ENCODE measurements at regions of chr9 and their contacts with region 1.

Region 1: DNA sequence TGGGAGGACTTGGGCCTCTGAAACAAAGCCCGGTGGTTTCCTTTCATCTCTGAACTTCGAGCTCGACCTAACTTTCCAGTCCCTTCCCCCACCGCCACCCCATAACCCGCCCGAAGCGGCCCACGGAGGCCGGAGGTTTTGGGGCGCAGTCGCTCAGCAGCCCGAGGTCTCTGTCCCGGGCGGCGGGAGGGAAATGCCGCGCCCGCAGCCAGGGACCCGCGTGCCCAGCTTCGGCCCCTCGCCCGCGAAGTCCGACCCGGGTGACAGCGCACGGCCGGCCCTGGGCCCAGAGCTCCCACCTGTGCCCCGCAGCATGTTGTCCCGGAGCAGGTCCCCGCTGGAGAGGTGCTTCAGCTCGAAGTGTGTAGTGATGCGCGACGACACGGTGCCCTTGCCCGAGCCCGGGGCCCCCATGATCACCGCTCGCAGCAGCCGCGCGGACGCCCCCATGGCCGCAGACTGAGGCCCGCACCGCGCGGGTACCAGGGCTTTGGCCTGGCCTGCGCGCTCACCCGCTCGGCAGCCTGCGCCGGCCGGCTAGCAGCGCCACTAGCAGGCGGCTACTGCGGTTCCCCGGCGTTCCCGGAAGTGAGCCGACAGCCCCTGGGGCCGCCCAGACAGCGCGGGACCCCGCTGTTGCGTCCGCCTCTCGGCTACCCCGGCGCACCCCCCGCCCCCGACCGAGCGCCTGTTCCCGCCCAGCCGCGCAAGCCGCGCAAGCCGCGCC is at the start of gene AK3:
- DNase-seq: peak; percentile 85
- H3K4me3 Mint-ChIP-seq: peak within 1 kb of the TSS; percentile 90
- H3K27ac Mint-ChIP-seq: peak within 1 kb of the TSS; percentile 89
- H3K4me1 Mint-ChIP-seq: peaks cover 29% of the 10 kb centered on the region
- H3K27me3 Mint-ChIP-seq: no peaks in the 10 kb centered on the region
- total RNA-seq, gene AK3: 33.9 and 34.5 TPM in 2 replicates

Region 2: GRCh38 chr9:4662108-4662988 is 78.5 kb before region 1 on chr9 and contains the start of gene PLPP6:
- intact Hi-C with region 1: loop called (anchors 5 kb)
- DNase-seq: peak; percentile 73
- H3K4me3 Mint-ChIP-seq: peak within 1 kb of the TSS; percentile 86
- H3K27ac Mint-ChIP-seq: peak within 1 kb of the TSS; percentile 63
- H3K4me1 Mint-ChIP-seq: peaks cover 48% of the 10 kb centered on the region
- H3K27me3 Mint-ChIP-seq: peaks cover 13% of the 10 kb centered on the region
- total RNA-seq, gene PLPP6: 4.8 and 5.9 TPM in 2 replicates

Region 3: DNA sequence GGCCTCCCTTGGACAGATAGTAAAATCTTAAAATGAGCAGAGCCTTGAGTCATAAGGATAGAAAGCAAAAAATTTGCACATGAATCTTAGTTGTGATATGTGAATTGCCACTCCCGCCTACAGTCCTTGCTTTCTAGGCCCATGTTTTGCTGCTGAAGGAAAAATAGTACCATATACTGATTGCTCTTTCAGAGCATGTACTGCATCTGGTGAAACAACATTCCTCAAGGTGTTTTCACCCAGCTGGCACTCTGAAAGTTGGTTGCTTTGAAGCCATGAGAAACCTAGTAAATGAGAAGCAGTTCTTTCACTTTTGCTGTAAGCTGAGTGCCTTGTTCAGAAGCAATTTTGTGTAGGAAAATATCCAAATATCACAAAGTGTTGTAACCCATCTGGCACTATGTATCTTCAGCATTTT is 51.1 kb before region 1 on chr9:
- intact Hi-C with region 1: loop called (anchors 2 kb)
- DNase-seq: no peak
- H3K4me3 Mint-ChIP-seq: no peak overlapping the region
- H3K27ac Mint-ChIP-seq: peak overlapping the region; percentile 57
- H3K4me1 Mint-ChIP-seq: peaks cover 25% of the 10 kb centered on the region
- H3K27me3 Mint-ChIP-seq: no peaks in the 10 kb centered on the region

Region 4: DNA sequence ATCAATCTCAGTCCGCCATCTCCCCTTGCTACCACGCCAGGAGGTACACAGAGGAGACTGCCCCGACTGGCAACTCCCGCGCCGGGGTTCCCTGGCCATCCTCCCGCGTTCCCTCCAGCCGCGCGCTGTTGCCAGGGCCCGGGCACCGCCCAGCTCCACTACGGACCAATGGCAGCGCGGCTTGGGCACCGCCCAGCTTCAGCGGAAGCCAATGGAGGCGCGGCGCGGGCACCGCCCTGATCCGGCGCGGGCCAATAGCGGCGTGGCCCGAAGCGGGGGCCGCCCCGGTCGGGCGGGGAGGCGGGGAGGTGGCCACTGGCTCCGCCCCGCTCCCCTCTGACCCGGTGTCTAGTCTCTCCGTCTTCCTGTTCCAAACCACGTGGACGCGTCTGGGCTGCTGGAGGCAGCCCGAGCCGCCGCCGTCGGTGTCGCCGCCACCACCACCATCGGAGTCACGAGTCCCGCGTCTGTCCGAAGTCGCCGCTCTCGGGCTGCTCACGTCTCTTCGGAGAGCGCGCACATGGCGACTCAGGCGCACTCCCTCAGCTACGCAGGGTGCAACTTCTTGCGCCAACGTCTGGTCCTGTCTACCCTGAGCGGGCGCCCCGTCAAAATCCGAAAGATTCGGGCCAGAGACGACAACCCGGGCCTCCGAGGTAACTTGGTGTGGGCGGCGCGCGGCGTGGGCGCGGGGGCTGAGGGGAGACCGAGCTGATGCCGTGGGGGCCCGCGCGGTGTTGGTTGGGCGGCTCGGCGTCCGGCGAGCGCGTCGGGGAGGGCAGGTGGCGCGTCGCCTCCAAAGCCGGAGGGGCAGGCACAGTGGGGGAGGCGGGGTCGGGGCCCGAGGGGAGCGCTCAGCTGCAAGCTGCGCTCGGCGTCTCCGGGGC is 52.0 kb after region 1 on chr9 and contains the start of gene RCL1:
- intact Hi-C with region 1: loop called (anchors 1 kb)
- DNase-seq: peak; percentile 97
- H3K4me3 Mint-ChIP-seq: peak within 1 kb of the TSS; percentile 93
- H3K27ac Mint-ChIP-seq: peak within 1 kb of the TSS; percentile 90
- H3K4me1 Mint-ChIP-seq: peaks cover 40% of the 10 kb centered on the region
- H3K27me3 Mint-ChIP-seq: peaks cover 2% of the 10 kb centered on the region
- total RNA-seq, gene RCL1: 34.5 and 36.3 TPM in 2 replicates

Region 5: GRCh38 chr9:5843794-5844504 is 1103.1 kb after region 1 on chr9:
- intact Hi-C with region 1: loop called (anchors 5 kb)
- DNase-seq: no peak
- H3K4me3 Mint-ChIP-seq: peak overlapping the region; percentile 64
- H3K27ac Mint-ChIP-seq: peak overlapping the region; percentile 95
- H3K4me1 Mint-ChIP-seq: peaks cover 79% of the 10 kb centered on the region
- H3K27me3 Mint-ChIP-seq: no peaks in the 10 kb centered on the region

Measured in activated T-helper 2 cell treated with anti-CD3 and anti-CD28 coated beads, Interferon-gamma antibody, Interleukin-2, Interleukin-4, amounts not matched to agents 10 μg/mL and 5 μg/mL and 100 μg/mL, durations not matched to agents 14 hours and 24 hours and 36 hours (primary cell).